MCF 10A (cell line): ENCODE measurements at regions of chr6 and their contacts with region 1.

Region 1: GRCh38 chr6:161486361-161487216 is 212.7 kb upstream of the AGPAT4 start:
- DNase-seq: peak; percentile 84
- H3K4me3 Mint-ChIP-seq: no peak overlapping the region
- H3K27ac Mint-ChIP-seq: peak overlapping the region; percentile 23
- H3K4me1 Mint-ChIP-seq: peaks cover 8% of the 10 kb centered on the region
- H3K27me3 Mint-ChIP-seq: no peaks in the 10 kb centered on the region
- CTCF ChIP-seq: no peak

Region 2: DNA sequence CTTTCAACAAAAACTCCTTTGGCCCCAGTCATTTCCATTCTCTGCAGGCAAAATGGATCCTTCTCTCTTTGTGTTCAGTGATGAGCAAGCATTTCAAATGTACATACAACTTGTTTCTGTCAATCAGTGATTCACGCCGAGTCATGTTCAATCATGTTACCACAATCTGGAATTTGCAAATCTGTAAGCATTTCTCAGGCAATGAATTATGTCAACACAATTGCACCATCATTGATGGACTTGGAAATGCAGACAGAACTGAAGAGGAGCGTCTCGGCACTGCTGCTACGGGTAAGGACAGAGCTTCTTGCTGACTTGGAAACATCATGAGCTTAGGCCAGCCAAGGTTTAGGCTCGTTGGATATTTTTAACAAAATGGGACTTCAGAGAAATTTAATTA is 79.9 kb before region 1 on chr6:
- CTCF ChIA-PET with region 1: no interaction called
- POLR2A ChIA-PET with region 1: interaction called, 19 read pairs
- intact Hi-C with region 1: no loop called
- DNase-seq: peak; percentile 97
- H3K4me3 Mint-ChIP-seq: peak overlapping the region; percentile 20
- H3K27ac Mint-ChIP-seq: peak overlapping the region; percentile 73
- H3K4me1 Mint-ChIP-seq: peaks cover 17% of the 10 kb centered on the region
- H3K27me3 Mint-ChIP-seq: no peaks in the 10 kb centered on the region
- CTCF ChIP-seq: no peak

Region 3: GRCh38 chr6:161439093-161439492 is 47.5 kb before region 1 on chr6:
- CTCF ChIA-PET with region 1: interaction called, 12 read pairs
- POLR2A ChIA-PET with region 1: interaction called, 20 read pairs
- intact Hi-C with region 1: no loop called
- DNase-seq: peak; percentile 97
- H3K4me3 Mint-ChIP-seq: peak overlapping the region; percentile 40
- H3K27ac Mint-ChIP-seq: peak overlapping the region; percentile 53
- H3K4me1 Mint-ChIP-seq: peaks cover 18% of the 10 kb centered on the region
- H3K27me3 Mint-ChIP-seq: no peaks in the 10 kb centered on the region
- CTCF ChIP-seq: no peak